ENCODE measurements at regions of chr7 and their contacts with region 1.

Region 1: DNA sequence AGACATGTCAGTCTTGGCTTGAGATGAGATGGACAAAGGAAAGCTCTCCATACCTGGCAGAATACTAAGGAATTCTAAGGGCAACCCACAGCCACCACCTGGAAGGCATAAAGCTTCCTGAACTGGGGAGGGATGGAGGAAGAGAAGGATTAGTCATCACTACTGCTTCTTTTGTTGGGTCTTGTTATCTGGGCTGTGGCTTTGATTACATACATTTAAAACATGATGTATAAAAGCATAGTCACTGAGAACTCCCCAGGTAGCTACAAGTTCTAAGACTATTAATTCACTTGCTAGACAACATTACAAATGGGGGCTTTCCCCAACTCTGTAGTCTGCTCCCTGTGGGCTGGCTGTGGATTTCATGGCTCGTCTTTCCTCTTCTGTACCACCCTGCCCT is 58.2 kb downstream of the RBM33 start:
- DNase-seq: peak; percentile 70
- H3K27ac ChIP-seq: peak overlapping the region; percentile 45; the same call in 1 of the 2 replicates
- CTCF ChIP-seq: no peak

Region 2: DNA sequence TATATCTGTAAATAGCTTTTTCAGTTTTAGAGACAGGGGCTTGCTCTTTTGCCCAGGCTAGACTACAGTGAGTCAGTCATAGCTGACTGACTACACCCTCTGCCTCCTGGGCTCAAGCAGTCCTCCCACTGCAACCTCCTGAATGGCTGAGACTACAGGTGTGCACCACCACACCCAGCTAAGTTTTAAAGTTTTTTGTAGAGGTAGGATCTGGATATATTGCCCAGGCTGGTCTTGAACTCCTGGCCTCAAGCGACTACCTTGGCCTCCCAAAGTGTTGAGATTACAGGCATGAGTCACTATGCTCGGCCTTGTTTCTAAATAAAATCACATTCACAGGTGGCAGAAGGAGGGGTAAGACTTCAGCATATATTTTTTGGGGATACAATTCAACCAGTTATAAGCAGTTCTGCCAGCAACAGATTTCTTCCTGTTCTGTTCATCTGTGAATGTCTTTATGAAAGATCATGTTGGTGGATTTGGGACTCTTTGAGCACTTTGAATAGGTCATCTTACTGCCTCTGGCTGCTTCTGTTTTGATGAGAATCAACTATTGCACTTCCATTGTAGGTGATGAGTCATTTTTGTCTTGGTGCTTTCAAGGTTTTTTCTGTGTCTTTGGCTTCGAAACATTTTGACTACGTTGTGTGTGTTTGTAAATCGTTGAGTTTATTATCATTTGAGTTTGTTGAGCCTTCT is 42.4 kb before region 1 on chr7:
- CTCF ChIA-PET with region 1: interaction called, 3 read pairs
- POLR2A ChIA-PET with region 1: interaction called, 11 read pairs
- DNase-seq: no peak
- H3K27ac ChIP-seq: no peak overlapping the region
- CTCF ChIP-seq: no peak